GM12878 (cell line): ENCODE measurements at regions of chr15 and their contacts with region 1.

Region 1: GRCh38 chr15:40893733-40894688 is at the start of gene VPS18:
- DNase-seq: peak; percentile 84
- ATAC-seq: peak; percentile 94
- H3K4me3 ChIP-seq: peak within 1 kb of the TSS; percentile 96
- H3K27ac ChIP-seq: peak within 1 kb of the TSS; percentile 86
- H3K4me1 ChIP-seq: peaks cover 21% of the 10 kb centered on the region
- H3K27me3 ChIP-seq: no peaks in the 10 kb centered on the region
- CTCF ChIP-seq: peak; percentile 92 to 97 (median 96)
- EP300 ChIP-seq: no peak
- POLR2A ChIP-seq: peak; percentile 80
- RAD21 ChIP-seq: peak; percentile 85
- polyA plus RNA-seq, gene VPS18: 0.71 to 1.7 TPM

Region 2: GRCh38 chr15:40684381-40684780 is 209.6 kb before region 1 on chr15:
- CTCF ChIA-PET with region 1: interaction called, 7 read pairs
- POLR2A ChIA-PET with region 1: no interaction called
- RAD21 ChIA-PET with region 1: interaction called, 3 read pairs
- SMC1A ChIA-PET with region 1: interaction called, 7 read pairs
- in situ Hi-C with region 1: no loop called
- intact Hi-C with region 1: loop called (anchors 1 kb)
- DNase-seq: no peak
- ATAC-seq: no peak
- H3K4me3 ChIP-seq: no peak overlapping the region
- H3K27ac ChIP-seq: no peak overlapping the region
- H3K4me1 ChIP-seq: no peaks in the 10 kb centered on the region
- H3K27me3 ChIP-seq: no peaks in the 10 kb centered on the region
- CTCF ChIP-seq: no peak
- EP300 ChIP-seq: no peak
- POLR2A ChIP-seq: no peak
- RAD21 ChIP-seq: no peak

Region 3: DNA sequence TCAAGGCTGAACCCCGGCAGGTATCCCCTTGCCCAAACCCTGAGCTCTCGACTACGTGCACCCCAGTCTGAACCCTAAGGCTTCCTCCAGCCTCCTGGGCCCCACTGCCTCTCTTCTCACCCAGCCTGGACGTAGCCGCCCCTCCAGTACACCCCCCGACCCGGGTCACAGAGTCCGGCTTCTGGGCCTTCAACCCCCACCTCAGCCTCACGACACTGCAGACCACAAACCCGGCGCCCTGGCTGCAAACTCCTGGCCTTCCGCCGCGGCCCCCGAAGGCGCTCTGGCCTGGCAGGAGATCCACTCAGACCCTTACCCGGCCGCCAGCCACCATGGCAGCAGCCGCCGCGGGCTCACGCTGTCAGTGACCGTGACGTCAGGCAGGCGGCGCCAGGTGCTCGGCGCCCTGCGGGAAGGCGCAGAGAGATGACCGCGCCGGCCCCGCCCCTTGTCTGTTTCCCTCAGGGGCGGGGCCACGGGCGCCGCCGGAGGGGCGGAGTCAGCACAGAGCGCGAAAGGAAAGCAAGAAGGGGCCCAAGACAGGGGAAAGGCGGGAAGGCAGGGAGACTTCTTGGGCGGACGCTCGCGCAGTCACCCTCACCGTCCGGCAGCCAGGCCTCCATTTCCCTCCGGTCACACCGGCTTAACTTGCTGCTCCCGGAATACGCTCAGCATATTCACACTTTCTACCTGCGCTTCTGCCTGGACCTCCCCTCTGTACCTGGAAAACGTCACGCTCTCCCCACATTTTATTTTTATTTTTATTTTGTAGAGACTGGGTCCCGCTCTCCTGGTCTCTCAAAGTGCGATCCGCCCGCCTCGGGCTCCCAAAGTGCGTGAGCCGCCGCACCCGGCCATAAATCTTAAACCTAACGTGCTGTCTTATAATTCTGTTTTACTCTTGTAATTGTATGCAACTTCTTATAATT is 138.9 kb before region 1 on chr15 and contains the start of gene RMDN3:
- CTCF ChIA-PET with region 1: interaction called, 6 read pairs
- POLR2A ChIA-PET with region 1: no interaction called
- RAD21 ChIA-PET with region 1: interaction called, 3 read pairs
- SMC1A ChIA-PET with region 1: interaction called, 4 read pairs
- in situ Hi-C with region 1: no loop called
- intact Hi-C with region 1: loop called (anchors 5 kb)
- DNase-seq: peak; percentile 69
- ATAC-seq: peak; percentile 89
- H3K4me3 ChIP-seq: peak within 1 kb of the TSS; percentile 91
- H3K27ac ChIP-seq: peak within 1 kb of the TSS; percentile 86
- H3K4me1 ChIP-seq: peaks cover 3% of the 10 kb centered on the region
- H3K27me3 ChIP-seq: no peaks in the 10 kb centered on the region
- CTCF ChIP-seq: no peak
- EP300 ChIP-seq: no peak; a peak in 1 of 4 replicates
- POLR2A ChIP-seq: peak; percentile 93
- RAD21 ChIP-seq: no peak
- polyA plus RNA-seq, gene RMDN3: 5.7 to 10.2 TPM

Region 4: DNA sequence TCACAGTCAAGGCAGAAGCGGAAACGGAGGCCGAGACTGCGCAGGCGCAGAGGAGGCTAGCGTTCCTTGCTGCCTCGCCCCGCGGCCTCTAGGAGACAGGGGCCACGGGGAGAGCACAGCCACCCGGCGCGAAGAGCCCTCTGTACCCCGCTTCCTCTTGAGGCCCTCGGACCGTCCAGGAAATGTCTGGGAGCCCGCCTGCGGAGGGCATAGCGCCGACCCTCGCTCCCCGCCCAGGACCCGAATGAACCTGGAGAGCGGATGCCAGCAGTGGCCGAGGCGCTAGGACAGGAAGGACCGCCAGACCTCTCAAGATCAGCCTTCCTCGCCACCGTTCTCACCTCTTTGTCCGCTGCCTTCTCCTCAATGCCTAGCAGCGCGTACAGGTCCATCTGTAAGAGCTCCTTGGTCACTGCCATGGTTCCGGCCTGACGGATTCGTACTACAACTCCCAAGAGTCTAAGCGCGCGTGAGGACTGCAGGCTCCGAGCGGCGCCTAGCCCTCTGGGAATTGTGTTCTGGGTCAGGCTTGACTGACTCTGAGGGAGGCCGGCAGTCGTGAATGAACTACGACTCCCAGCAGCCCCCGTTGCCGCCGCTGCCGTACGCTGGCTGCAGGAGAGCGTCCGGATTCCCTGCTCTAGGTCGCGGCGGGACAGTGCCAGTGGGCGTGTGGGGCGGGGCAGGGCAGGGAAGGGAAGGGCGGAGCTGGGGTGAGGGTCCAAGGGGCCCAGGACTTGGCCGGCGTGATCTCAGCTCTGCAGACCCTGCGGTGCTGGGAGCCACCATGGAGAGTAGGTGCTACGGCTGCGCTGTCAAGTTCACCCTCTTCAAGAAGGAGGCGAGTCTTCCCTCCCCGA is 86.8 kb before region 1 on chr15 and contains the starts of genes DNAJC17 and ZFYVE19:
- CTCF ChIA-PET with region 1: interaction called, 8 read pairs
- POLR2A ChIA-PET with region 1: interaction called, 5 read pairs
- RAD21 ChIA-PET with region 1: interaction called, 16 read pairs
- SMC1A ChIA-PET with region 1: interaction called, 7 read pairs
- in situ Hi-C with region 1: no loop called
- intact Hi-C with region 1: no loop called
- DNase-seq: peak; percentile 93
- ATAC-seq: peak; percentile 97
- H3K4me3 ChIP-seq: peak within 1 kb of the TSS; percentile 79
- H3K27ac ChIP-seq: peak within 1 kb of the TSS; percentile 98
- H3K4me1 ChIP-seq: peaks cover 15% of the 10 kb centered on the region; the same call in 1 of the 2 replicates
- H3K27me3 ChIP-seq: no peaks in the 10 kb centered on the region
- CTCF ChIP-seq: peak in 1 of 3 experiments; percentile 20; a peak in 1 of 6 replicates
- EP300 ChIP-seq: no peak
- POLR2A ChIP-seq: peak; percentile 90
- RAD21 ChIP-seq: no peak
- polyA plus RNA-seq, gene DNAJC17: 6.1 to 11.5 TPM
- polyA plus RNA-seq, gene ZFYVE19: 1.7 to 4.4 TPM

Region 5: DNA sequence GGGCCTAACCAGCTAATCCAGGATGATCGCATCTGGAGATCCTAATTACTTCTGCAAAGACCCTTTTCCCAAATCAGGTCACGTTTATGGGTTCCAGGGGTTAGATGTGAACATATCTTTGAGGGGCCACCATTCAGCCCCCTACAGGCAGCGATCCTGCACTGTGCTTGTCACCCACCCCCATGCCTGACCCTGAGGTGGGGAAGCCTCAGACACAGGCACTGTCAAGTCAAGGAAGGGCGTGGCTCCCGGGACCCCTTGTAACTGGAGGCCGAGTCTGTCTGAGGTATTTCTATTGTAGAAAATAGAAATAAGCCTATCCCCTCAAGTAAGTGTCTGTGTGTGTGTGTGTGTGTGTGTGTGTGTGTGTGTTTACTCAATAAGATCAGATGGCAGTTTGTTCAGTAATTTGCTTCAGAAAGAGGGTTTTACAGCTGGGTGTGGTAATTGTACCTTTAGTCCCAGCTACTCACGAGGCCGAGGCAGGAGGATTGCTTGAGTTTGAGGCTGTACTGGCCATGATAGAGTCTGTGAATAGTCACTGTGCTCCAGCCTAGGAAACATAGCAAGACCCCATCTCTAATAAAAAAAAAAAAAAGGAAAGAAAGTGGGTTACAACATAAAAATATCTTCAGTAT is 41.6 kb before region 1 on chr15:
- CTCF ChIA-PET with region 1: interaction called, 37 read pairs
- POLR2A ChIA-PET with region 1: interaction called, 9 read pairs
- RAD21 ChIA-PET with region 1: interaction called, 20 read pairs
- SMC1A ChIA-PET with region 1: interaction called, 144 read pairs
- in situ Hi-C with region 1: loop called (anchors 5 kb)
- intact Hi-C with region 1: loop called (anchors 1 kb)
- DNase-seq: no peak
- ATAC-seq: no peak
- H3K4me3 ChIP-seq: no peak overlapping the region
- H3K27ac ChIP-seq: no peak overlapping the region
- H3K4me1 ChIP-seq: peaks cover 5% of the 10 kb centered on the region
- H3K27me3 ChIP-seq: no peaks in the 10 kb centered on the region
- CTCF ChIP-seq: no peak
- EP300 ChIP-seq: no peak
- POLR2A ChIP-seq: no peak
- RAD21 ChIP-seq: no peak

Region 6: GRCh38 chr15:40873625-40874561 is 20.1 kb before region 1 on chr15 and contains the start of gene RHOV:
- CTCF ChIA-PET with region 1: interaction called, 57 read pairs
- POLR2A ChIA-PET with region 1: interaction called, 220 read pairs
- RAD21 ChIA-PET with region 1: interaction called, 551 read pairs
- SMC1A ChIA-PET with region 1: interaction called, 454 read pairs
- in situ Hi-C with region 1: no loop called
- intact Hi-C with region 1: loop called (anchors 2 kb)
- DNase-seq: no peak
- ATAC-seq: peak; percentile 80
- H3K4me3 ChIP-seq: peak within 1 kb of the TSS; percentile 65
- H3K27ac ChIP-seq: peak within 1 kb of the TSS; percentile 78
- H3K4me1 ChIP-seq: peaks cover 37% of the 10 kb centered on the region
- H3K27me3 ChIP-seq: no peaks in the 10 kb centered on the region
- CTCF ChIP-seq: peak; percentile 44 to 63 (median 55); a peak in 5 of 6 replicates
- EP300 ChIP-seq: no peak
- POLR2A ChIP-seq: peak; percentile 90
- RAD21 ChIP-seq: peak; percentile 32; the same call in 1 of the 2 replicates
- polyA plus RNA-seq, gene RHOV: 0.24 to 1.3 TPM

Region 7: GRCh38 chr15:40906091-40906990 is 12.3 kb after region 1 on chr15:
- CTCF ChIA-PET with region 1: interaction called, 95 read pairs
- POLR2A ChIA-PET with region 1: interaction called, 10 read pairs
- RAD21 ChIA-PET with region 1: interaction called, 13 read pairs
- SMC1A ChIA-PET with region 1: interaction called, 12 read pairs
- in situ Hi-C with region 1: no loop called
- intact Hi-C with region 1: no loop called
- DNase-seq: no peak
- ATAC-seq: peak; percentile 91
- H3K4me3 ChIP-seq: peak overlapping the region; percentile 60
- H3K27ac ChIP-seq: peak overlapping the region; percentile 49
- H3K4me1 ChIP-seq: peaks cover 24% of the 10 kb centered on the region
- H3K27me3 ChIP-seq: no peaks in the 10 kb centered on the region
- CTCF ChIP-seq: peak; percentile 73 to 90 (median 89)
- EP300 ChIP-seq: no peak
- POLR2A ChIP-seq: peak; percentile 52; the same call in 1 of the 2 replicates
- RAD21 ChIP-seq: peak; percentile 66

Region 8: GRCh38 chr15:40921949-40922607 is 28.1 kb after region 1 on chr15:
- CTCF ChIA-PET with region 1: no interaction called
- POLR2A ChIA-PET with region 1: no interaction called
- RAD21 ChIA-PET with region 1: no interaction called
- SMC1A ChIA-PET with region 1: no interaction called
- in situ Hi-C with region 1: no loop called
- intact Hi-C with region 1: no loop called
- DNase-seq: no peak
- ATAC-seq: no peak
- H3K4me3 ChIP-seq: no peak overlapping the region
- H3K27ac ChIP-seq: no peak overlapping the region
- H3K4me1 ChIP-seq: peaks cover 8% of the 10 kb centered on the region; the same call in 1 of the 2 replicates
- H3K27me3 ChIP-seq: peaks cover 11 to 18% of the 10 kb centered on the region in 2 experiments
- CTCF ChIP-seq: no peak
- EP300 ChIP-seq: no peak
- POLR2A ChIP-seq: no peak
- RAD21 ChIP-seq: no peak

Region 9: GRCh38 chr15:41048397-41048796 is 154.4 kb after region 1 on chr15:
- CTCF ChIA-PET with region 1: no interaction called
- POLR2A ChIA-PET with region 1: no interaction called
- RAD21 ChIA-PET with region 1: no interaction called
- SMC1A ChIA-PET with region 1: no interaction called
- in situ Hi-C with region 1: no loop called
- intact Hi-C with region 1: no loop called
- DNase-seq: no peak
- ATAC-seq: peak; percentile 77
- H3K4me3 ChIP-seq: no peak overlapping the region
- H3K27ac ChIP-seq: no peak overlapping the region
- H3K4me1 ChIP-seq: no peaks in the 10 kb centered on the region
- H3K27me3 ChIP-seq: no peaks in the 10 kb centered on the region
- CTCF ChIP-seq: no peak
- EP300 ChIP-seq: no peak
- POLR2A ChIP-seq: no peak
- RAD21 ChIP-seq: no peak

Region 10: DNA sequence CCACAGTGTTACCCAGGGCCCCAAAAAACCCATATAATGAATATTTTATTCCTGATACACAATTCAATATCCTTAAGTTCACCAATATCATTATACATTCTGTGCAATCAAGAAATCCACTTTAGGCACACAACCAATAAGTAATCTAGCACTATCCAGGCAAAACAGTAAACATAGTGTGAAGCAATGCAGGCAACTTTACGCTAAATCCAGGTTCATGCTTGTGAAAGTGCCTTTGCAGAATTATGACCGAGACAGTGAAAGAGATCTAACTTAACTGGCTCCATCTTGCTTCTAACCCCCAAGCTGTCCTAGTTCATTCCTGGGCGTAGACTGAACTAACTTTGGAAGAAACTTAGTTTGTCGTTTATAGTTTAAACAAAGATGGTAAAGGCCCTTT is 256.3 kb after region 1 on chr15:
- CTCF ChIA-PET with region 1: no interaction called
- POLR2A ChIA-PET with region 1: no interaction called
- RAD21 ChIA-PET with region 1: no interaction called
- SMC1A ChIA-PET with region 1: no interaction called
- in situ Hi-C with region 1: no loop called
- intact Hi-C with region 1: no loop called
- DNase-seq: no peak
- ATAC-seq: no peak
- H3K4me3 ChIP-seq: no peak overlapping the region
- H3K27ac ChIP-seq: no peak overlapping the region
- H3K4me1 ChIP-seq: no peaks in the 10 kb centered on the region
- H3K27me3 ChIP-seq: no peaks in the 10 kb centered on the region
- CTCF ChIP-seq: no peak
- EP300 ChIP-seq: no peak
- POLR2A ChIP-seq: no peak
- RAD21 ChIP-seq: no peak